ENCODE measurements at regions of chr12 and their contacts with region 1.

Region 1: DNA sequence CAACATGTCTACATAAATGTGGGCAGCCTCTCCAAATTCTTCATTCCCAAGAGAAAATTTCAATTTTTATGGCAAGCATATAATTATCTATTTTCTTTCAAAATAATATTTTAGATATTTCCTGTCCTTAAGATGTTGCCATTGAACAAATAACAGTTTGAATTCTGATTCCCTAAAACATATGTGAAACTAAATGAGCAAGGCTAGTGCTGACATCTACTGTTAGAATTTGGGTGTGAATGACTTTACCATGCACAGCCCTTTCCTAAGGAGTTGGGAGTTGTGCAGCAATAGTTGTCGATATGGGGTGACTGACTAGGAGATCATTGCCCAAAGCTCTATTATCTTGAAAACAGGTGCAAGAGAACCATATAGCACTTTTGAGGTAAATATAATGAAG is 108.2 kb upstream of the SLC38A4 start:
- DNase-seq: no peak
- H3K4me3 ChIP-seq: no peak overlapping the region
- H3K27ac ChIP-seq: no peak overlapping the region
- H3K4me1 ChIP-seq: no peaks in the 10 kb centered on the region
- H3K27me3 ChIP-seq: no peaks in the 10 kb centered on the region
- CTCF ChIP-seq: peak; percentile 26 to 61 (median 37)

Region 2: GRCh38 chr12:46124848-46125619 is 808.9 kb before region 1 on chr12:
- intact Hi-C with region 1: loop called (anchors 2 kb)
- DNase-seq: peak in 1 of 2 donors; percentile 75
- H3K4me3 ChIP-seq: peak overlapping the region; percentile 18 to 44
- H3K27ac ChIP-seq: no peak overlapping the region
- H3K4me1 ChIP-seq: peaks cover 0 to 3% of the 10 kb centered on the region in 2 donors
- H3K27me3 ChIP-seq: no peaks in the 10 kb centered on the region
- CTCF ChIP-seq: peak; percentile 60 to 74 (median 72)

Region 3: GRCh38 chr12:46342562-46343033 is 591.3 kb before region 1 on chr12:
- intact Hi-C with region 1: loop called (anchors 2 kb)
- DNase-seq: peak in 1 of 2 donors; percentile 64
- H3K4me3 ChIP-seq: no peak overlapping the region
- H3K27ac ChIP-seq: peak overlapping the region; percentile 32 to 51
- H3K4me1 ChIP-seq: peaks cover 5% of the 10 kb centered on the region in 2 donors
- H3K27me3 ChIP-seq: no peaks in the 10 kb centered on the region
- CTCF ChIP-seq: peak; percentile 34 to 65 (median 59)

Region 4: DNA sequence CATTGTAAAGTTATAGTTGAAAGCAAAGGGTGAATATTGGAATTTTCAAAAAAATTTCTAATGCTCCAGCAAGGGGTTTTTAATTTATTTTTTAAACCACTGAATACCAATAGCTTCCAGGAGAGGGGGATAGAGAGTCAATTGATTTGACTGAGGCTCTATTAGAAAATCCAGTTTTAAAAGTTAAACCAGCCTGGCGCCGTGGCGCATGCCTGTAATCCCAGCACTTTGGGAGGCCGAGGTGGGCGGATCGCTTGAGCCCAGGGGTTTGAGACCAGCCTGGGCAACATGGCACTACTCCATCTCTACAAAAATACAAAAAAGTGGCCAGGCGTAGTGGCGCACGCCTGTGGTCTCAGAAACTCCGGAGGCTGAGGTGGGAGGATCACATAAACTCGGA is 258.2 kb before region 1 on chr12:
- intact Hi-C with region 1: loop called (anchors 5 kb)
- DNase-seq: no peak
- H3K4me3 ChIP-seq: peak overlapping the region in 1 of 2 donors; percentile 37
- H3K27ac ChIP-seq: no peak overlapping the region
- H3K4me1 ChIP-seq: peaks cover 0 to 4% of the 10 kb centered on the region in 2 donors
- H3K27me3 ChIP-seq: no peaks in the 10 kb centered on the region
- CTCF ChIP-seq: peak; percentile 52 to 79 (median 69)

Measured in ascending aorta (tissue), 2 donors.